ENCODE measurements at regions of chr1 and their contacts with region 1.

Region 1: DNA sequence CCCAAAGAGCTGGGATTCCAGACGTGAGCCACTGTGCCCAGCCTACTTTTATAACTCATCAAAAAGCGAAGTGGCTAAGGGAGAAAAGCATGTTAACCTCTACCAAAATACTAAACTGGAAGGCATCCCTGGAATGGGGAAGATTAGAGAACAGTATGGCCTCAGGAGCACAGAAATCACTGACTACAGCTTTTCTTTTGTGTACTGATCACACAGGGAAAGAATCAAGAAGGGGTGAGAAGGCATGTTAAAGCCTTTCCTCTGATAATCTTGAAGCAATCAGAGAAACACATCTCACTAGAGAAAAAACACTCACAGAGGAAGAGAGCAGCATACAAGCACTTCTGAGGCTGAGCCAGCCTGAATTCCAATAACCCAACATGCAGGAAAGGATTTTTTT is 10.7 kb downstream of the PCAT6 start:
- DNase-seq: no peak
- H3K4me3 ChIP-seq: no peak overlapping the region
- CTCF ChIP-seq: no peak

Region 2: DNA sequence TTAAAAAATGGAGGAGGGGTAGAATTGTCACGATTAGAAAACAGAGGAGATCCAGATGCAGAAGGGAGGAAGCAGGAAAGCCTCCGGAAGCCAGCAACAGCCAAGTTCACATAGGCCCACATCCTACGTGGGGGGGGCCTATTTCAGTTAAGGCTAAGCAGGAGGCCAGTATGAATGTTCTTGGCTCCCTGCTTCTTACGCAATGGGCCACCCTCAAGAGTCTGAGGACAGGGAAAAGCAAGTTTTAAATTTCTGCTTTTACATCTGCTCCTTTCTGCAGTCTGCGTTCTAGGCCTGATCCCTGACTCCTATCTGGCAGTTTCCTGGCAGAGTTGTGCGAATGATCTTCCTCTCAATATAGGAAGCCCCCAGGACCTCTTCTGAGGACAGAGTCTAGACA is 36.9 kb after region 1 on chr1:
- in situ Hi-C with region 1: loop called (anchors 5 kb)
- DNase-seq: no peak
- H3K4me3 ChIP-seq: no peak overlapping the region
- CTCF ChIP-seq: no peak